ENCODE measurements at regions of chr12 and their contacts with region 1.

Region 1: GRCh38 chr12:14365294-14366208 is at the start of gene ATF7IP:
- DNase-seq: peak; percentile 97
- ATAC-seq: peak; percentile 98
- total RNA-seq, gene ATF7IP: 91.8 TPM

Region 2: GRCh38 chr12:14239935-14240872 is 125.3 kb before region 1 on chr12:
- intact Hi-C with region 1: loop called (anchors 10 kb)
- DNase-seq: no peak
- ATAC-seq: peak; percentile 53

Region 3: GRCh38 chr12:14384783-14385638 is 19.5 kb after region 1 on chr12:
- intact Hi-C with region 1: loop called (anchors 1 kb)
- DNase-seq: no peak
- ATAC-seq: peak; percentile 94

Region 4: GRCh38 chr12:14417715-14418114 is 52.2 kb after region 1 on chr12:
- intact Hi-C with region 1: no loop called
- DNase-seq: peak; percentile 64
- ATAC-seq: peak; percentile 80